ENCODE measurements at regions of chr14 and their contacts with region 1.

Region 1: GRCh38 chr14:100645192-100645990 is 58.2 kb upstream of the BEGAIN start:
- DNase-seq: peak; percentile 92
- ATAC-seq: peak; percentile 89
- H3K4me3 Mint-ChIP-seq: peak overlapping the region; percentile 49
- H3K27ac Mint-ChIP-seq: peak overlapping the region; percentile 86
- H3K4me1 Mint-ChIP-seq: peaks cover 68% of the 10 kb centered on the region
- H3K27me3 Mint-ChIP-seq: peaks cover 13% of the 10 kb centered on the region

Region 2: GRCh38 chr14:100383727-100384158 is 261.6 kb before region 1 on chr14:
- CTCF ChIA-PET with region 1: interaction called, 162 read pairs
- POLR2A ChIA-PET with region 1: interaction called, 3 read pairs
- DNase-seq: peak; percentile 73
- ATAC-seq: peak; percentile 91
- H3K4me3 Mint-ChIP-seq: no peak overlapping the region
- H3K27ac Mint-ChIP-seq: no peak overlapping the region
- H3K4me1 Mint-ChIP-seq: peaks cover 15% of the 10 kb centered on the region
- H3K27me3 Mint-ChIP-seq: no peaks in the 10 kb centered on the region

Region 3: GRCh38 chr14:100440187-100440631 is 205.2 kb before region 1 on chr14:
- CTCF ChIA-PET with region 1: interaction called, 77 read pairs
- POLR2A ChIA-PET with region 1: no interaction called
- DNase-seq: peak; percentile 54
- ATAC-seq: peak; percentile 67
- H3K4me3 Mint-ChIP-seq: no peak overlapping the region
- H3K27ac Mint-ChIP-seq: no peak overlapping the region
- H3K4me1 Mint-ChIP-seq: peaks cover 17% of the 10 kb centered on the region
- H3K27me3 Mint-ChIP-seq: no peaks in the 10 kb centered on the region

Region 4: DNA sequence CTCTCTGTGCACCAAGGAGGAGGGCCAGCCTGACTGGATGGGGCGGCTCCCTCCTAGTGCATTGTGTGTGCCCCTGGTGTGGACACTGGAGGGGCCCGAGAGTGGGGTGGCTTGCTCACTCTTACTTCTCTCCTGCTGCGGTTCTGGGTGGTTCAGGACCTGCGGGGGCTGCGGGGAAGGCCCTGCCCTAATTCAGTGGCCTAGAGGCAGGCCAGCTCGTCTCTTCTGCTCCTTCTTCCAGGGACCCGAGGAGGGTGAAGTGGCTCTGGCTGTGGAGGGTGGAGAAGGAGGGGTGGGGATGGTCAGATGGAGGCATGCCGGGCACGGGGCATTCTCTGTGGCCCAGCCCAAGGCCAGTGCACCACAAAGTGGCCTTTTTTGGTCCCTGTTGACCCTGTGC is 145.3 kb before region 1 on chr14:
- CTCF ChIA-PET with region 1: no interaction called
- POLR2A ChIA-PET with region 1: no interaction called
- DNase-seq: no peak
- ATAC-seq: no peak
- H3K4me3 Mint-ChIP-seq: no peak overlapping the region
- H3K27ac Mint-ChIP-seq: no peak overlapping the region
- H3K4me1 Mint-ChIP-seq: peaks cover 8% of the 10 kb centered on the region
- H3K27me3 Mint-ChIP-seq: no peaks in the 10 kb centered on the region

Region 5: GRCh38 chr14:100524933-100525243 is 120.5 kb before region 1 on chr14:
- CTCF ChIA-PET with region 1: interaction called, 58 read pairs
- POLR2A ChIA-PET with region 1: no interaction called
- DNase-seq: peak; percentile 50
- ATAC-seq: no peak
- H3K4me3 Mint-ChIP-seq: no peak overlapping the region
- H3K27ac Mint-ChIP-seq: no peak overlapping the region
- H3K4me1 Mint-ChIP-seq: no peaks in the 10 kb centered on the region
- H3K27me3 Mint-ChIP-seq: no peaks in the 10 kb centered on the region

Region 6: DNA sequence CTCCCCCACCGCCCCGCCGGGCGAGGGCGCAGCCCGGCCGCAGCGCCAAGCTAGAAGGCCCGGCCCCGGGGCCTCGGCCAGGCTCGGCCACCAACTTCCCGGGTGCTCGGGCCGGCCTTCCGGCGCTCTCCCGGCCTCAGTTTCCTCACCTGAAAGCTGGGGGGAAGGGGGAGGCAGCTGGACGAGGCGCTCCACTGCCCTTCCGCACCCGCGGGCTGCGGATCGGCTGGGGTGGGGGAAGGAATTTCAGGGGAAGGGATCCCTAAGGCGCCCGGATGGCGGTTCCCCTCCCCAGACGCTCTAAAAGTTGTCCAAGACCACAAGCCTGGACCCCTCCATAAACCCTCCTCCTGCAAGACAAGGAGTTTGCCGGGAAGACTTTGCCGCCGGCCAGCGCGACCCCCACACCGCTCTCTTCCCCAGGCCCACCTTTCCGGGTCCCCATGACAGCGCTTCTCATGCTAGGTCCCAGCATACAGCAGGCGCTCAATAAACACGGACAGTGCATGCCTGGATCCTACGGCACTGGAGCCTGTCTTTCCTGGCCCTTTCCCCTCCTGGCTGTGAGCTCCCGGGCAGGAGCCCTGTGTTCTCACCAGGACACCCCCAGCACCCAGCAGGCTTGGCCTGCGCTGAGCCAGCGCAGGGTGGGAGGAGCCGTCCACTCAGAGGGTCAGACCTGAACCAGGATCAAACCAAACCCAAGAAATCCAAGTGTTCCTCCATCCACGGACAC is 76.2 kb before region 1 on chr14:
- CTCF ChIA-PET with region 1: interaction called, 10 read pairs
- POLR2A ChIA-PET with region 1: no interaction called
- DNase-seq: no peak
- ATAC-seq: no peak
- H3K4me3 Mint-ChIP-seq: peak overlapping the region; percentile 34
- H3K27ac Mint-ChIP-seq: no peak overlapping the region
- H3K4me1 Mint-ChIP-seq: peaks cover 5% of the 10 kb centered on the region
- H3K27me3 Mint-ChIP-seq: peaks cover 36% of the 10 kb centered on the region

Region 7: DNA sequence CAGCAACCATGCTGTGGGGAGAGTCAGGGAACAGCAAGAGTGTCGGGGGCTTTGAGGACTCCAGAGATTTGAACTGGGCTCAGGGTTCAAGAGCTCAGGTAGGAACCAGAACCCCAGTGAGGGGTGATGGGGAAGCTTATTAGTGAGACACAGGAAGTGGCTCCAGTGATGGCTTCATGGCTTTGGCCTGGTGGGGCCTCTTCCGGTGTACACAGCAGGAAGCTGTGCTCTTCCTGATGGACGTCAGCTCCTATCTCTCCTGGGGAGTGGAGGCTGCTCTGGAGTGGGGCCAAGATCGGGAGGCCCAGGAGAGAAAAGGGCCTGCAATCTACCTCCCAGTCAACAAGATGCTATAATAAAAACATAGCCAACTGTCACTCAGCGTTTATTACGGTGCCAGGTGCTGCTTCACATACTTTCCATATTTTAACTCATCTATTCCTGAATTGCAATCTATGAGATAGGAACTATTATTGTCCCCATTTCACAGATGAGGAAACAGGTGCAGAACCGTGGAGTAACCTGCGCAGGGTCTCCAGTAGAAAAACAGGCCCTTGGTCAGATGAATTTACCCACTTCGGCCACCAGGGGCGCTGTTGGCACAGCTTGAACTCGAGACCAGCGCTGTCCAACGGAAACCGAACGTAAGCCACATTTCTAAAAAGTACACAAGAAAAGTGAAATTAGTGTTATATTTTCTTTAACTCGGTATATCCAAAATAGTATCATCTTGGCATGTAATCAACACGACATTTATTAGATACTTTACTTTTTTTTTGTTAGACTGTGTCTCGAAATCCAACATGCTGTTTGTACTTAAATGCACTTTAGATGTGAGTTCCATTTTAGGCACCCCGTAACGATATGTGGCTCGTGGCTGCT is 17.7 kb after region 1 on chr14:
- CTCF ChIA-PET with region 1: interaction called, 22 read pairs
- POLR2A ChIA-PET with region 1: interaction called, 3 read pairs
- DNase-seq: peak; percentile 72
- ATAC-seq: peak; percentile 70
- H3K4me3 Mint-ChIP-seq: no peak overlapping the region
- H3K27ac Mint-ChIP-seq: peak overlapping the region; percentile 47
- H3K4me1 Mint-ChIP-seq: peaks cover 10% of the 10 kb centered on the region
- H3K27me3 Mint-ChIP-seq: peaks cover 8% of the 10 kb centered on the region

Region 8: DNA sequence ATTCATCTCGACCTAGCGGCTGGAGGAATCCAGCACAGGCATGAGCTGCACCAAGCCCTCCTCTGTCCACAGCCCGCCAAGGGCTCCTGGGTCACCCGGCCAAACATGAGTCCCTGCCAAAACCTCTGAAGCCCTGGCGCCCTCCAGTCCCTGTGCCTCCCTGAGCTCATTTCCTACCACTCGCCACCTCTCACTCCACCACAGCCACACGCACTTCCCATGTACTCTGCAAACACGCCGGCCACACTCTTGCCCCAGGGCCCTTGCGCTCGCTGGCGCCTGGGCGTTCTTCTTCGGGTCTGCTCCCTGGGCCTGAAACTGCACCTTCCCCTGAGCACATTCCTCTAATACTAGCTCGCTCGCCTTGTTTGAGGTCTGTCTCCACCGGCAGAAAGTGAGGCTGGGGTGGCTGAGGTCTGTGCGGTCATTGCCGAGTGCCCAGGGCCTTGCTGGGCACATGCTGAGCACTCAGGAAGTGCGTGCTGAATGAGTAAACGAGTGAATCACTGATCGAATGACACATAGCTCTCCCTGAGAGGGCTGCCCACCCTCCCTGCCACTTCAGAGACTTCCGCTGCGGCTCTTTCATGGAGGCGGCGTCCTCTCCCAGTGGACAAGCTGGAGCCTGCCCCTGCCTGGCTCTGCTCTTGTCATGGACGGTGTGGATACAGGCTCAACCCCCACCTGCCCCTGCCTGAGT is 47.6 kb after region 1 on chr14:
- CTCF ChIA-PET with region 1: no interaction called
- POLR2A ChIA-PET with region 1: no interaction called
- DNase-seq: no peak
- ATAC-seq: no peak
- H3K4me3 Mint-ChIP-seq: no peak overlapping the region
- H3K27ac Mint-ChIP-seq: no peak overlapping the region
- H3K4me1 Mint-ChIP-seq: no peaks in the 10 kb centered on the region
- H3K27me3 Mint-ChIP-seq: no peaks in the 10 kb centered on the region

Region 9: GRCh38 chr14:100726550-100727085 is 81.2 kb after region 1 on chr14 and contains the start of gene DLK1:
- CTCF ChIA-PET with region 1: no interaction called
- POLR2A ChIA-PET with region 1: no interaction called
- DNase-seq: no peak
- ATAC-seq: no peak
- H3K4me3 Mint-ChIP-seq: no peak within 1 kb of the TSS
- H3K27ac Mint-ChIP-seq: no peak within 1 kb of the TSS
- H3K4me1 Mint-ChIP-seq: no peaks in the 10 kb centered on the region
- H3K27me3 Mint-ChIP-seq: peaks cover 33% of the 10 kb centered on the region
- total RNA-seq, gene DLK1: not detected